ENCODE measurements at regions of chr7 and their contacts with region 1.

Region 1: GRCh38 chr7:102279537-102280400 is 6.9 kb upstream of the SH2B2 start:
- DNase-seq: peak; percentile 65
- ATAC-seq: peak; percentile 94
- H3K4me3 Mint-ChIP-seq: peak overlapping the region; percentile 71
- H3K27ac Mint-ChIP-seq: peak overlapping the region; percentile 76
- H3K4me1 Mint-ChIP-seq: peaks cover 36% of the 10 kb centered on the region
- H3K27me3 Mint-ChIP-seq: no peaks in the 10 kb centered on the region
- CTCF ChIP-seq: peak; percentile 24

Region 2: DNA sequence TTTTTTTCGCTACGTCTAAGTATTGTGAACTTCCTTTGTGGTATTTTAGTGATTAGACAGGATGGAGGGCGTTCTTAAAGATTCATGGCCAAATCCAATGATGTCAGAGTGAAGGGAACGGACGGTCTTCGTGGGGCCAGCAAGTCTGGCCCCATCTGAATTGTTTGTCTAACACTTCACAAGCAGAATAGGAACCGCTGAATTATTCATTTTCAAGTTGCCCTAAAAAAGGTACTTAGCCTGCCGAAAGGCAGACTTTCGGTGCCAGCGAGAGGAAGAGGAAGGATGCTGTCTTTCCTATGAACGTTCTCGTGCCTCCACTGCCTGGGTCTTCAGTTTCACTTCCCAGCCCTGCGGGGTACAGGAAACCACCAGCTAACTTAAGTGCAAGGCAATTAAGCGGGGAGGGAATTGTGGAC is 138.8 kb before region 1 on chr7:
- CTCF ChIA-PET with region 1: no interaction called
- POLR2A ChIA-PET with region 1: no interaction called
- intact Hi-C with region 1: no loop called
- DNase-seq: peak; percentile 36
- ATAC-seq: peak; percentile 81
- H3K4me3 Mint-ChIP-seq: peak overlapping the region; percentile 62
- H3K27ac Mint-ChIP-seq: peak overlapping the region; percentile 75
- H3K4me1 Mint-ChIP-seq: peaks cover 14% of the 10 kb centered on the region
- H3K27me3 Mint-ChIP-seq: no peaks in the 10 kb centered on the region
- CTCF ChIP-seq: no peak

Region 3: DNA sequence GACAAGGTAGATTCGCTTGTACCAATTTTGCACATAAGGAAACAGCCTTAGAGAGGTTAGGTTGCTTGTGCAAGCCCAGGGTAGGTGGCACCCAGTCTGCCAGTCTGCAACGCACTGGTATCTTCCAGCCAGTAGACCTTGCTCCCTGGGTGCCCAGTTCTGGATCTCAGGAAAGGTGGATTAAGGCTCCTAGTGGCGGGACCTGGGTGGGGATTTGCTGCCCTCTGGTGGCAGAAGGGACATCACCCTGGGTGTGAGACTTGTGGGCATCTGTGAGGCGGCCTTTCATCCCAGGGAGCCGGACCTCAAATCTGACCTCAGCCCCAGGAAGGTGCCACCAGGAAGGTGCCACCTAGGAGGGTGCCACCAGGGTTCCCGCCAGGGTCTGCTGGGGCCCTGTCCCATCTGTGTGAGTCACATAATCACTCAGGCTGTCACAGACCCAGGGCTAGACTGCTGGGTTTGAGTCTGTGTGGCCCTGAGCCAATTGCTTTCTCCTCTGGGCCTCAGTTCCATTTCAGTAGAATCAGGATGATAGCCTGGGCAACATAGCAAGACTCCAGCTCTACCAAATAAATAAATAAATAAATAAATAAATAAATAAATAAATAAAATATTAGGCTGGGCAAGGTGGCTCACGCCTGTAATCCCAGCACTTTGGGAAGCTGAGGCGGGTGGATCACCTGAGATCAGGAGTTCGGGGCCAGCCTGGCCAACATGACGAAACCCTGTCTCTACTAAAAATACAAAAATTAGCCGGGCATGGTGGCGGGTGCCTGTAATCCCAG is 111.1 kb after region 1 on chr7:
- CTCF ChIA-PET with region 1: interaction called, 91 read pairs
- POLR2A ChIA-PET with region 1: interaction called, 6 read pairs
- intact Hi-C with region 1: loop called (anchors 1 kb)
- DNase-seq: peak; percentile 69
- ATAC-seq: peak; percentile 74
- H3K4me3 Mint-ChIP-seq: no peak overlapping the region
- H3K27ac Mint-ChIP-seq: no peak overlapping the region
- H3K4me1 Mint-ChIP-seq: peaks cover 14% of the 10 kb centered on the region
- H3K27me3 Mint-ChIP-seq: no peaks in the 10 kb centered on the region
- CTCF ChIP-seq: no peak

Region 4: DNA sequence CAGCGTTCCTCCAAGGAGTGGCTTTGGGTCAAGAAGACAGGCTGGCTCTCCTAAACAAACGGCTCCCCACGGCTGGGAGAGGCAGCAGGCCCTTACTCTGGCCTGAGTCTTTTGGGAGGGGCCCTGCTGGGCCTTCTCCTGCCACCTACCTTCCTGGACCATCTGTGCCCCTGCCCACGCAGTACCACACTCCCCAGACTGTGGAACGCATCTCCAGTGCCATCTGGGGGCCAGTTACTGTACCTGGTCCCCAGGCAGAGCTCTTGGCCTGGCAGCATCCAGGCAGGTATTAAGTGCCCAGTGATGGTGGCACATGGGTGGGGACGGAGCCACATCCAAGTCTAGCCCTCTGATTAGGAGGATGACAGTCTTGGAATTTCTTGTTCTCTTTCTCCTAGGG is 170.5 kb after region 1 on chr7:
- CTCF ChIA-PET with region 1: interaction called, 10 read pairs
- POLR2A ChIA-PET with region 1: no interaction called
- intact Hi-C with region 1: loop called (anchors 1 kb)
- DNase-seq: peak; percentile 46
- ATAC-seq: peak; percentile 88
- H3K4me3 Mint-ChIP-seq: no peak overlapping the region
- H3K27ac Mint-ChIP-seq: peak overlapping the region; percentile 63
- H3K4me1 Mint-ChIP-seq: peaks cover 29% of the 10 kb centered on the region
- H3K27me3 Mint-ChIP-seq: no peaks in the 10 kb centered on the region
- CTCF ChIP-seq: no peak

Measured in activated B cell treated with CpG ODN at 0.5 μM for 24 hours (primary cell).